Psoas muscle (tissue), 8 donors: ENCODE measurements at regions of chr3 and their contacts with region 1.

Region 1: DNA sequence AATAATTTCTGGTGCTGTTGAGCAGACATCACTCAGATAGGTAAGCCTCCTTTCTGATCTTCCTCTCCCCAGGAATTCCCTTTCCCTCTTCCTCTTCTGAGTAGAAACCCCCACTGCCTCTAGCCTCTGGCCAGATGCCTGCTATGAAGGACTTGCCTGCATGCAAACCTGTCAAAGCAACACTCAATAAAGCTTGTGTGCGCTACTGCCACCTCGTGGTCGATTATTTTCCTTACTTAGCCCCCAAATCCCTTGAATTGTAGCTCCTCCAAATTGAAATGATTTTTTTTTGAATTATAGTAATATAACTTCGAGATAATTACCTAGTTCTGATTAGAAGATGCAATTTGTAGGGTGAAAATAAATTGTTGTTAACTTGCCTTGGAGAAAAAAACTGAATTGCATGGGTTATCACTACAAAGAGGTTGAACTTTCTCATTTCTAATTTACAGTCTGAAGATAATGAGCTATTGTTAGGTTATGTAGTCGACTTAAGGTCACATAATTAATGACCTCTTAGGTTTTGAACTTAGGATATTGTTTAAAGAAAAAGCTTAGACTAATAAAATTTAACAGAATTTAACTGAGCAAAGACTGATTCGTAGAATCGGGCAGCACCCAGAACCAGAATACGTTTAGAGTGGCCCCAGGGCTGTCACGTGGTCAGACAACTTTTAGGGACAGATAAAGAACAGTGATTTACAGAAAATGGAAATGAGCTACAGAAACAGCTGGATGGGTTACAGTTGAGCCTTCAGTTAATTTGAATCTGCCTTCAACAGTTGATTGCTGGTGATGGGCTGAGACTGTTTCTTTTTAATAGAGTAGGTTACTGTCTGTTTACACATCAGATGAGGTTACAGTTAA is 269.3 kb downstream of the ARPP21 start:
- DNase-seq: peak; percentile 30 to 65
- ATAC-seq: peak; percentile 52 to 79 (median 65)
- H3K4me3 ChIP-seq: no peak overlapping the region
- H3K27ac ChIP-seq: no peak overlapping the region
- H3K4me1 ChIP-seq: no peaks in the 10 kb centered on the region
- H3K27me3 ChIP-seq: no peaks in the 10 kb centered on the region
- CTCF ChIP-seq: peak; percentile 80

Region 2: GRCh38 chr3:35800960-35801459 is 107.6 kb before region 1 on chr3:
- intact Hi-C with region 1: loop called in 1 of 2 experiments (anchors 10 kb)
- DNase-seq: no peak
- ATAC-seq: peak; percentile 2 to 27 (median 14)
- H3K4me3 ChIP-seq: no peak overlapping the region
- H3K27ac ChIP-seq: no peak overlapping the region
- H3K4me1 ChIP-seq: no peaks in the 10 kb centered on the region
- H3K27me3 ChIP-seq: no peaks in the 10 kb centered on the region
- CTCF ChIP-seq: no peak

Region 3: GRCh38 chr3:35965908-35966307 is 57.3 kb after region 1 on chr3:
- intact Hi-C with region 1: no loop called
- DNase-seq: no peak
- ATAC-seq: no peak
- H3K4me3 ChIP-seq: no peak overlapping the region
- H3K27ac ChIP-seq: no peak overlapping the region
- H3K4me1 ChIP-seq: no peaks in the 10 kb centered on the region
- H3K27me3 ChIP-seq: no peaks in the 10 kb centered on the region
- CTCF ChIP-seq: peak; percentile 51